HepG2 (cell line): ENCODE measurements at regions of chr2 and their contacts with region 1.

Region 1: GRCh38 chr2:50401772-50402653 is 629.9 kb downstream of the NRXN1 start:
- DNase-seq: peak; percentile 46
- ATAC-seq: peak; percentile 75
- H3K4me3 ChIP-seq: no peak overlapping the region
- H3K27ac ChIP-seq: no peak overlapping the region
- H3K4me1 ChIP-seq: no peaks in the 10 kb centered on the region
- H3K27me3 ChIP-seq: no peaks in the 10 kb centered on the region
- CTCF ChIP-seq: peak; percentile 90
- EP300 ChIP-seq: no peak
- POLR2A ChIP-seq: no peak
- RAD21 ChIP-seq: peak; percentile 64; the same call in 1 of the 2 replicates

Region 2: GRCh38 chr2:48952143-48952542 is 1449.9 kb before region 1 on chr2:
- CTCF ChIA-PET with region 1: interaction called, 19 read pairs
- POLR2A ChIA-PET with region 1: no interaction called
- in situ Hi-C with region 1: loop called (anchors 5 kb)
- intact Hi-C with region 1: no loop called
- DNase-seq: no peak
- ATAC-seq: no peak
- H3K4me3 ChIP-seq: no peak overlapping the region
- H3K27ac ChIP-seq: no peak overlapping the region
- H3K4me1 ChIP-seq: 0 out of 2 replicates have a peak, but pooled peaks cover 6% of the 10 kb centered on the region
- H3K27me3 ChIP-seq: no peaks in the 10 kb centered on the region; a peak in 1 of 5 replicates
- CTCF ChIP-seq: no peak
- EP300 ChIP-seq: no peak
- POLR2A ChIP-seq: no peak
- RAD21 ChIP-seq: no peak

Region 3: DNA sequence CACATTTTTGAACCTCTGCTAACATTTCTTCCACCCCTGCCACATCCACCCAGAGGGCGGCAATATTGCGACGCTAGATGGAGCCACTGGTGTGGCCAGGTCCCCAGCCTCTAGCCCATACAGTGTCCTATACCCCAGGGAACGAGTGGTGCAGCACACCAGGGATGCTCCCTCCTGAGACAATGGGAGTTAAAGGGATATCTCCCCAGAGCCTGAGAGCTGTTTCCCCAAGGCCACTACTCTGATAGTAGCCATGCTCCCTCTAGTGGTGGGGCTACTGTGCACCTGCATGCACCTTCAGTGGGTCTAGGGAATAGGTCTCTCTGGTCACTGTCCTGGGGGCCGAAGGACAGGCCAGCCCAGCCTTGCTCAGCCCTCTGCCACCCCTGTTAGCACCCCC is 911.3 kb before region 1 on chr2:
- CTCF ChIA-PET with region 1: no interaction called
- POLR2A ChIA-PET with region 1: no interaction called
- in situ Hi-C with region 1: no loop called
- intact Hi-C with region 1: loop called (anchors 5 kb)
- DNase-seq: peak; percentile 29
- ATAC-seq: peak; percentile 99
- H3K4me3 ChIP-seq: no peak overlapping the region
- H3K27ac ChIP-seq: no peak overlapping the region
- H3K4me1 ChIP-seq: no peaks in the 10 kb centered on the region
- H3K27me3 ChIP-seq: no peaks in the 10 kb centered on the region
- CTCF ChIP-seq: peak; percentile 72
- EP300 ChIP-seq: no peak
- POLR2A ChIP-seq: no peak
- RAD21 ChIP-seq: peak; percentile 39; the same call in 1 of the 2 replicates

Region 4: GRCh38 chr2:49616800-49617199 is 785.2 kb before region 1 on chr2:
- CTCF ChIA-PET with region 1: no interaction called
- POLR2A ChIA-PET with region 1: no interaction called
- in situ Hi-C with region 1: loop called (anchors 25 kb)
- intact Hi-C with region 1: no loop called
- DNase-seq: peak; percentile 30
- ATAC-seq: peak; percentile 86
- H3K4me3 ChIP-seq: no peak overlapping the region
- H3K27ac ChIP-seq: no peak overlapping the region
- H3K4me1 ChIP-seq: 0 out of 2 replicates have a peak, but pooled peaks cover 2% of the 10 kb centered on the region
- H3K27me3 ChIP-seq: no peaks in the 10 kb centered on the region
- CTCF ChIP-seq: peak; percentile 65
- EP300 ChIP-seq: no peak
- POLR2A ChIP-seq: no peak
- RAD21 ChIP-seq: no peak

Region 5: DNA sequence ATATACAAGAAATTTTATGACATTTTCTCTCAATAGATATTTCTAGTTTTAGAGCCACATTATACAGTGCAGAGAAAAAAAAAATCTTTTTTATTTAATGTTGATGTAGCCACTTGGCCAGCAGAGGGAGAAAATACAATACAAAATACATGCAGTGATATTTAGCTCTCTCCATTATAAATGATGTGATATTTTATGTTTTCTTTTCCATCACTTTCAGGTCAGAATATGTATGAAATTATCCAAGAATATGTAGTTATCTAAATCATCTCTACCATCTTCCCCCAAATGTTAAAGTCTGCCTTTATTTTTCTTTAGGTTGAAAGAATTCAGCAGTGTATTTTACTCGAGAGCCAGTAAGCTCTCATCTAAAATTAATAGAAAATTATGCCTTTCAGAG is 714.1 kb before region 1 on chr2:
- CTCF ChIA-PET with region 1: interaction called, 4 read pairs
- POLR2A ChIA-PET with region 1: no interaction called
- in situ Hi-C with region 1: no loop called
- intact Hi-C with region 1: loop called (anchors 1 kb)
- DNase-seq: no peak
- ATAC-seq: peak; percentile 62
- H3K4me3 ChIP-seq: no peak overlapping the region
- H3K27ac ChIP-seq: no peak overlapping the region
- H3K4me1 ChIP-seq: no peaks in the 10 kb centered on the region
- H3K27me3 ChIP-seq: no peaks in the 10 kb centered on the region
- CTCF ChIP-seq: no peak
- EP300 ChIP-seq: no peak
- POLR2A ChIP-seq: no peak
- RAD21 ChIP-seq: no peak

Region 6: DNA sequence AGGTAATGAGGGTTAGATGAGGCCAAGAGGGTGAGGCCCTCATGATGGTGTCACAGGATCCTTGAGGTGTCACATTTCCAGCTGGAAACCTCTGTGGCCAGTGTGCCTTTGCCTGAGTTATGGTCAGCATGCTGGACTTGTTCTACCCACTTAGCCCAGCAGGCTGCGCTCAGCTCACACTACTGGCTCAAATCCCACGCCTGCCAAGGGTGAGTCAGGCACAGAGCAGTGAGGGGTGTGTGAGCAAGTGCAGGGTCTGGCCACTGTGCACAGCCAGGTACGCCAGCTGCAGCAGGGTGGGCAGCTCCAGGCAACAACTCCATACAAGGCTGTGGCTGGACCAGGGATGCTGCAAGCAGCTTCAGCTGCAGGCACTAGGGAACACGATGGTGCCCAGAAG is 631.1 kb before region 1 on chr2:
- CTCF ChIA-PET with region 1: interaction called, 10 read pairs
- POLR2A ChIA-PET with region 1: no interaction called
- in situ Hi-C with region 1: loop called (anchors 10 kb)
- intact Hi-C with region 1: loop called (anchors 1 kb)
- DNase-seq: peak; percentile 53
- ATAC-seq: peak; percentile 100
- H3K4me3 ChIP-seq: no peak overlapping the region
- H3K27ac ChIP-seq: no peak overlapping the region
- H3K4me1 ChIP-seq: no peaks in the 10 kb centered on the region
- H3K27me3 ChIP-seq: no peaks in the 10 kb centered on the region
- CTCF ChIP-seq: peak; percentile 94
- EP300 ChIP-seq: no peak
- POLR2A ChIP-seq: no peak
- RAD21 ChIP-seq: peak; percentile 86

Region 7: GRCh38 chr2:50385349-50385748 is 16.7 kb before region 1 on chr2:
- CTCF ChIA-PET with region 1: no interaction called
- POLR2A ChIA-PET with region 1: no interaction called
- in situ Hi-C with region 1: no loop called
- intact Hi-C with region 1: no loop called
- DNase-seq: no peak
- ATAC-seq: no peak
- H3K4me3 ChIP-seq: no peak overlapping the region
- H3K27ac ChIP-seq: no peak overlapping the region
- H3K4me1 ChIP-seq: no peaks in the 10 kb centered on the region
- H3K27me3 ChIP-seq: no peaks in the 10 kb centered on the region
- CTCF ChIP-seq: no peak
- EP300 ChIP-seq: no peak
- POLR2A ChIP-seq: no peak
- RAD21 ChIP-seq: no peak

Region 8: GRCh38 chr2:50449306-50449705 is 47.3 kb after region 1 on chr2:
- CTCF ChIA-PET with region 1: no interaction called
- POLR2A ChIA-PET with region 1: no interaction called
- in situ Hi-C with region 1: no loop called
- intact Hi-C with region 1: no loop called
- DNase-seq: no peak
- ATAC-seq: no peak
- H3K4me3 ChIP-seq: no peak overlapping the region
- H3K27ac ChIP-seq: no peak overlapping the region
- H3K4me1 ChIP-seq: no peaks in the 10 kb centered on the region
- H3K27me3 ChIP-seq: no peaks in the 10 kb centered on the region
- CTCF ChIP-seq: no peak
- EP300 ChIP-seq: no peak
- POLR2A ChIP-seq: no peak
- RAD21 ChIP-seq: no peak